PC-3 (cell line): ENCODE measurements at regions of chr6 and their contacts with region 1.

Region 1: GRCh38 chr6:45421709-45422502 is 44.2 kb upstream of the SUPT3H start:
- DNase-seq: peak; percentile 72
- ATAC-seq: peak; percentile 58
- H3K4me3 ChIP-seq: peak overlapping the region; percentile 93
- H3K27ac ChIP-seq: peak overlapping the region; percentile 73
- H3K4me1 ChIP-seq: peaks cover 33% of the 10 kb centered on the region
- H3K27me3 ChIP-seq: no peaks in the 10 kb centered on the region
- CTCF ChIP-seq: peak; percentile 37

Region 2: GRCh38 chr6:44655412-44656342 is 766.2 kb before region 1 on chr6:
- CTCF ChIA-PET with region 1: interaction called, 5 read pairs
- POLR2A ChIA-PET with region 1: no interaction called
- intact Hi-C with region 1: loop called (anchors 2 kb)
- DNase-seq: peak; percentile 58
- ATAC-seq: peak; percentile 75
- H3K4me3 ChIP-seq: peak overlapping the region; percentile 11; the same call in 1 of the 2 replicates
- H3K27ac ChIP-seq: no peak overlapping the region
- H3K4me1 ChIP-seq: peaks cover 6% of the 10 kb centered on the region
- H3K27me3 ChIP-seq: no peaks in the 10 kb centered on the region
- CTCF ChIP-seq: peak; percentile 97

Region 3: GRCh38 chr6:45094831-45095230 is 327.1 kb before region 1 on chr6:
- CTCF ChIA-PET with region 1: no interaction called
- POLR2A ChIA-PET with region 1: no interaction called
- intact Hi-C with region 1: no loop called
- DNase-seq: no peak
- ATAC-seq: no peak
- H3K4me3 ChIP-seq: no peak overlapping the region
- H3K27ac ChIP-seq: no peak overlapping the region
- H3K4me1 ChIP-seq: no peaks in the 10 kb centered on the region
- H3K27me3 ChIP-seq: no peaks in the 10 kb centered on the region
- CTCF ChIP-seq: no peak

Region 4: DNA sequence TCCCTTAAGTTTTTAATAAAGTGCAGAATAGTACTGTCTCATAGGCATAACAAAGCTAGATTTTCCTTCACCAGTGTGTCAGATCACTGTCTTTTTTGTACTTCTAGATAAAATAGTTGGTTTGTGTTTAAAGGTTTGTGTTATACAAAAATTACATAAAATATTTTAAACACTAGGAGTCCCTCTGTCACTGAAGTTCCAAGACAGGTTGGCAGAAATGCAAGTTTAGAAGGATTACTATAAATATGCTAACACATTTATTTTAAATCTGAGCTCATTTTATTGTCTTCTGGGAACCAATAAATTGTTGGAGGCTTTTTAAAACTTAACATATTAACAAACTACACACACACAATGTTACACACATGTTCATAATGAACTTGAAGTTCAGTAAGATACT is 124.6 kb before region 1 on chr6:
- CTCF ChIA-PET with region 1: interaction called, 3 read pairs
- POLR2A ChIA-PET with region 1: no interaction called
- intact Hi-C with region 1: loop called (anchors 1 kb)
- DNase-seq: no peak
- ATAC-seq: peak; percentile 54
- H3K4me3 ChIP-seq: no peak overlapping the region
- H3K27ac ChIP-seq: no peak overlapping the region
- H3K4me1 ChIP-seq: no peaks in the 10 kb centered on the region
- H3K27me3 ChIP-seq: no peaks in the 10 kb centered on the region
- CTCF ChIP-seq: 0 out of 2 replicates have a peak, but pooled peaks have one; percentile 13

Region 5: GRCh38 chr6:45608252-45608911 is 186.5 kb after region 1 on chr6:
- CTCF ChIA-PET with region 1: no interaction called
- POLR2A ChIA-PET with region 1: no interaction called
- intact Hi-C with region 1: loop called (anchors 2 kb)
- DNase-seq: peak; percentile 93
- ATAC-seq: peak; percentile 61
- H3K4me3 ChIP-seq: peak overlapping the region; percentile 44; the same call in 1 of the 2 replicates
- H3K27ac ChIP-seq: peak overlapping the region; percentile 99
- H3K4me1 ChIP-seq: peaks cover 42% of the 10 kb centered on the region
- H3K27me3 ChIP-seq: no peaks in the 10 kb centered on the region
- CTCF ChIP-seq: 0 out of 2 replicates have a peak, but pooled peaks have one; percentile 23

Region 6: DNA sequence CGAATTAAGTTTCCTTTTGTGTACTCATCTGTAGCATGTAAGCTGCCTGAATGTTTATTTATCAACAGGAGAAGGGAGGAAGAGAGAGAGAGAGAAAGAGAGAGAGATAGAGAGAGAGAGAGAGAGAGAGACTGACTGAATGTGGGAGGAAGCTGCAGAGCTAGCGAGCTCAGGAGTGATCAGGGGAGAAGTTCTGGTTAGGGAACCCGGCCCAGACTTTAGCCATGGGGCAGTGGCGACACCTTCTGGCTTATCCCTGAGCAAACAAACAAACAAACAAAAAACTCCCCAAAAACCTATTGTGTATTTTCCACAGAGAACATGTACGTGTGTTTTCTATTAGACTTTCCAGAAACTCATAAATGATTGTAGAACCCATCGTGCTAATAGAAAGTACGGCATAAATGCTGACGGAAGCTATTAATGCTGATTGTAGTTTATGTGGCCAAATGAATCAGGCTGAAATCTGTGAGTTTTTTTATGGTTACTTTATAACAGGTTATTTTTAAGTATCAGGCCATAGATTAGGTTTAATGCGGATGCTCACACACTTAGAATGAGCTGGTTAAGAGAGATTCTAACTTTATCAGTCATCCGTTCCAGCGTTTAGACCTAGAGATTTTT is 500.9 kb after region 1 on chr6:
- CTCF ChIA-PET with region 1: no interaction called
- POLR2A ChIA-PET with region 1: no interaction called
- intact Hi-C with region 1: loop called (anchors 2 kb)
- DNase-seq: peak; percentile 72
- ATAC-seq: peak; percentile 72
- H3K4me3 ChIP-seq: no peak overlapping the region; the same call in 1 of the 2 replicates
- H3K27ac ChIP-seq: no peak overlapping the region
- H3K4me1 ChIP-seq: peaks cover 33% of the 10 kb centered on the region
- H3K27me3 ChIP-seq: no peaks in the 10 kb centered on the region
- CTCF ChIP-seq: peak; percentile 91